ENCODE measurements at regions of chr2 and their contacts with region 1.

Region 1: GRCh38 chr2:148874868-148875341 is at the start of gene KIF5C:
- DNase-seq: peak; percentile 96
- H3K4me3 Mint-ChIP-seq: peak within 1 kb of the TSS; percentile 86
- H3K27ac Mint-ChIP-seq: peak within 1 kb of the TSS; percentile 38
- H3K4me1 Mint-ChIP-seq: peaks cover 13% of the 10 kb centered on the region
- H3K27me3 Mint-ChIP-seq: peaks cover 11% of the 10 kb centered on the region
- total RNA-seq, gene KIF5C: 25.2 to 30.8 TPM

Region 2: GRCh38 chr2:148020111-148021058 is 854.5 kb before region 1 on chr2 and contains the start of gene ORC4:
- CTCF ChIA-PET with region 1: no interaction called
- POLR2A ChIA-PET with region 1: no interaction called
- intact Hi-C with region 1: loop called (anchors 1 kb)
- DNase-seq: peak; percentile 99
- H3K4me3 Mint-ChIP-seq: peak within 1 kb of the TSS; percentile 100
- H3K27ac Mint-ChIP-seq: peak within 1 kb of the TSS; percentile 97
- H3K4me1 Mint-ChIP-seq: peaks cover 39% of the 10 kb centered on the region
- H3K27me3 Mint-ChIP-seq: no peaks in the 10 kb centered on the region
- total RNA-seq, gene ORC4: 34.1 to 34.9 TPM

Region 3: DNA sequence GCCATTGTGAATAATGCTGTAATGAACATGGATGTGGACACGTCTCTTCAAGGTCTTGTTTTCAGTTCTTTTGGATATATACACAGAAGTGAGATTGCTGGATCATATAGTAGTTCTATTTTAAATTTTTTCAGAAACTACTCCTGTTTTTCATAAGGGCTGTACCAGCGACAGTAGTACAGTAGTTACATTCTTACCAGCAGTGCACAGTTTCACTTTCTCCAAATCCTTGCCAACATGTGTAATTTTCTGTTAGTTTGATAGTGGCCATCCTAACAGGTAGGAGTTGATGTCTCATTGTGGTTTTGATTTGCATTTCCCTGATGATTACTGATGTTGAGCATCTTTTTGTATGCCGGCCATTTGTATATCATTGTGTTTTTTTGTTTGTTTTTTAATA is 148.7 kb before region 1 on chr2:
- CTCF ChIA-PET with region 1: no interaction called
- POLR2A ChIA-PET with region 1: no interaction called
- intact Hi-C with region 1: loop called (anchors 5 kb)
- DNase-seq: no peak
- H3K4me3 Mint-ChIP-seq: no peak overlapping the region
- H3K27ac Mint-ChIP-seq: peak overlapping the region; percentile 33
- H3K4me1 Mint-ChIP-seq: peaks cover 50% of the 10 kb centered on the region
- H3K27me3 Mint-ChIP-seq: no peaks in the 10 kb centered on the region

Region 4: DNA sequence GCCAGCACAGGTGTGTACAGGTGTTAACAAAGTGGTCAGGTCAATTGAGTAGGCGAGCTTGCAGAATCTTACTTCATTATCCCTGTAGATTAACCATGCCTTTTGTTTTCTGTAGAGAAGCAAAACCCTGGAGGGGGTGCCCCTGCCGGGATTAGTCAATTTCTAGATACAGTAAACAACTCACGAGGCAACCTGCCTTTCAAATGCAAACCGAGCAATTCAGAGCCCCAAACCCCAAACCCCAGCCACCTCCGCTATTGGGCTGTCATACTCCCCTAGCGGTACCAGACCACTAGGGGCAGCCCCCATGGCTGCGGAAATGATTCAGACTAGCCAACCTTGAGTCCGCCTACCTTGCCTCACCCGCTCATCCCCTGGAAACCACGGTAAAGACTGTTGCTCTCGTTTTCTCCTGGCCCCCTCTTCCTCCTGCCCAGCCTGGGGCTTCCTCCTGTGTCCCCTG is 61.3 kb before region 1 on chr2:
- CTCF ChIA-PET with region 1: no interaction called
- POLR2A ChIA-PET with region 1: interaction called, 3 read pairs
- intact Hi-C with region 1: loop called (anchors 1 kb)
- DNase-seq: peak; percentile 95
- H3K4me3 Mint-ChIP-seq: no peak overlapping the region
- H3K27ac Mint-ChIP-seq: peak overlapping the region; percentile 29
- H3K4me1 Mint-ChIP-seq: peaks cover 22% of the 10 kb centered on the region
- H3K27me3 Mint-ChIP-seq: peaks cover 11% of the 10 kb centered on the region

Region 5: GRCh38 chr2:148824190-148824589 is 50.7 kb before region 1 on chr2:
- CTCF ChIA-PET with region 1: no interaction called
- POLR2A ChIA-PET with region 1: no interaction called
- intact Hi-C with region 1: no loop called
- DNase-seq: no peak
- H3K4me3 Mint-ChIP-seq: no peak overlapping the region
- H3K27ac Mint-ChIP-seq: no peak overlapping the region
- H3K4me1 Mint-ChIP-seq: no peaks in the 10 kb centered on the region
- H3K27me3 Mint-ChIP-seq: peaks cover 4% of the 10 kb centered on the region

Region 6: GRCh38 chr2:148888003-148888501 is 13.1 kb after region 1 on chr2:
- CTCF ChIA-PET with region 1: interaction called, 3 read pairs
- POLR2A ChIA-PET with region 1: no interaction called
- intact Hi-C with region 1: loop called (anchors 1 kb)
- DNase-seq: peak; percentile 28
- H3K4me3 Mint-ChIP-seq: peak overlapping the region; percentile 77
- H3K27ac Mint-ChIP-seq: no peak overlapping the region
- H3K4me1 Mint-ChIP-seq: peaks cover 13% of the 10 kb centered on the region
- H3K27me3 Mint-ChIP-seq: peaks cover 12% of the 10 kb centered on the region

Region 7: DNA sequence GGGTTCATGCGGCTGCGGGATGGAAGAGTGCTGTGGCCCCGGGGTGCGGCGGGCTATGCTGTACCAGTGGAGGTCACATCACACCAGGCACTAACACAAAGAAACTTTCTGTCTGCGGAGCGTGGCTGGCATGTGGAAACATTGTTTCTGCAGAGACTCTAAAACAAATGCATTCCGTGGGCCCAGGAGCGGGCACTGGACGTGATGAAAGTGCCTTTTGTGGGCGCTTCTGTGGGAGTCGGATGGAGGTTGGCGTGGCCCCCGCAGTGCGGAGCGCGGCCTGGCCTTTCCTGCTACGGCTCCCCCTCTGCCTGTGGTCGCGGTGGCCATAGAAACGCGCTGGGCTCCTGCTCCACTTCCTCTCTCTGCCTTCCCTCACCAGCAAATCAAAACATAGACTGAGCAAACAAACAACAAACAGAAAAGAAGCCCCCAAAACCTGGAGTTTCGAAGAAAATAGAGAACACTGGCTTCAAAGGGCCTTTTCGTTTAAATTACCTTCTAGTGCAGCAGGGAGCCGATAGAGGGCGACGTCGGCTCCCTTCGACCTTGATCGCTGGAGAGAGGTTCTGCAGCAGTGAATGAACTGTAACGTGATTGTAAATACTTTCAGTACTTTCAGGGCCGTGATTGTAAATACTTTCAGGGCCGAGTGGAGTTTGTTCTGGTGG is 51.5 kb after region 1 on chr2:
- CTCF ChIA-PET with region 1: interaction called, 3 read pairs
- POLR2A ChIA-PET with region 1: no interaction called
- intact Hi-C with region 1: loop called (anchors 1 kb)
- DNase-seq: peak; percentile 68
- H3K4me3 Mint-ChIP-seq: peak overlapping the region; percentile 77
- H3K27ac Mint-ChIP-seq: peak overlapping the region; percentile 61
- H3K4me1 Mint-ChIP-seq: peaks cover 18% of the 10 kb centered on the region
- H3K27me3 Mint-ChIP-seq: no peaks in the 10 kb centered on the region